Activated CD4-positive, alpha-beta memory T cell treated with anti-CD3 and anti-CD28 coated beads, Interleukin-2, amount 10 ng/mL, durations not matched to agents 7 days and 5 days (primary cell): ENCODE measurements at regions of chr9 and their contacts with region 1.

Region 1: GRCh38 chr9:4862506-4863250 is 69.9 kb downstream of the RCL1 start:
- DNase-seq: no peak
- H3K4me3 Mint-ChIP-seq: no peak overlapping the region
- H3K27ac Mint-ChIP-seq: no peak overlapping the region
- H3K4me1 Mint-ChIP-seq: peaks cover 38% of the 10 kb centered on the region
- H3K27me3 Mint-ChIP-seq: no peaks in the 10 kb centered on the region

Region 2: DNA sequence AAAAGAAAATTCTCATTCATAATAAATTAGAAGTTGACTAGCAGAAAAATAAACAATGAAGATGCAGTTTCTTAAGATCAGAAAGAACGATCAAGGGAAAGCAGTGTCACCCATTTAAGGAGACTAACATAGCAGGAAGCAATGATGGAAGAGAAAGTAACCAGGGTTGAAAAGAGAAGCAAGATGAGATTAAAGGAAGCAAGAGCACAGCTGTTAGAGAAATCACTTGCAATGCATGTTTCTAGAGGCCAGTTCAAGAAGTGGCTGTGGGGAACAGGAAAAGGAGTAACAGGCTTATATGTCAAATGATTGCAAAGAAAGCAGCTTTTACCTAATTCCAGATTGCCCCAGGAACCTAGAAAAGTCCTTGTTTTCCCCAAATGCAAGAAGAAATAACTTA is 419.2 kb before region 1 on chr9:
- CTCF ChIA-PET with region 1: no interaction called
- POLR2A ChIA-PET with region 1: no interaction called
- DNase-seq: no peak
- H3K4me3 Mint-ChIP-seq: no peak overlapping the region
- H3K27ac Mint-ChIP-seq: no peak overlapping the region
- H3K4me1 Mint-ChIP-seq: no peaks in the 10 kb centered on the region
- H3K27me3 Mint-ChIP-seq: peaks cover 17% of the 10 kb centered on the region

Region 3: DNA sequence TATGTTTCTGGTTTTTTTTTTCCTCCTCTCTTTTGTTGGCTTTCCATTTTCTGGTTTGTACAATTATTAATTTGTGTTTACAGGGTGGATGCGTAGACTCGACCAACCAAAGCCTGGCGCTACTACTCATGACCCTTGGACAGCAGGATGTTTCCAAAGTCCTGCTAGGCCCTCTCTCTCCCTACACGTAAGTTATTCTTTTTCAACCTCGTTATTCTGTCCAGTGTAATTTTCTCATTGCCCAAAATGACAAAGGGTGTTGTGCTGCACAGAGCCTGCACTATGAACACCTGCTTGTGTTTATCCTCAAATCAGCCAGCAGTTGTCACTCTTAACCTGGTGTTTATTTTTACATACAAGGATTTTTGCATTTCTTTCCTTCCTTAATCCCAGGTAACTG is 13.3 kb before region 1 on chr9:
- CTCF ChIA-PET with region 1: interaction called, 8 read pairs
- POLR2A ChIA-PET with region 1: interaction called, 17 read pairs
- DNase-seq: no peak
- H3K4me3 Mint-ChIP-seq: no peak overlapping the region
- H3K27ac Mint-ChIP-seq: no peak overlapping the region
- H3K4me1 Mint-ChIP-seq: peaks cover 18% of the 10 kb centered on the region
- H3K27me3 Mint-ChIP-seq: no peaks in the 10 kb centered on the region